Activated naive CD4-positive, alpha-beta T cell treated with anti-CD3 and anti-CD28 coated beads for 36 hours (primary cell): ENCODE measurements at regions of chr17 and their contacts with region 1.

Region 1: GRCh38 chr17:17919169-17920107 is 52.8 kb downstream of the TOM1L2 start:
- DNase-seq: peak; percentile 82
- H3K4me3 Mint-ChIP-seq: no peak overlapping the region
- H3K27ac Mint-ChIP-seq: no peak overlapping the region
- H3K4me1 Mint-ChIP-seq: peaks cover 16% of the 10 kb centered on the region
- H3K27me3 Mint-ChIP-seq: no peaks in the 10 kb centered on the region

Region 2: GRCh38 chr17:17641621-17642409 is 277.6 kb before region 1 on chr17:
- CTCF ChIA-PET with region 1: interaction called, 11 read pairs
- intact Hi-C with region 1: no loop called
- DNase-seq: peak; percentile 90
- H3K4me3 Mint-ChIP-seq: no peak overlapping the region
- H3K27ac Mint-ChIP-seq: no peak overlapping the region
- H3K4me1 Mint-ChIP-seq: no peaks in the 10 kb centered on the region
- H3K27me3 Mint-ChIP-seq: no peaks in the 10 kb centered on the region

Region 3: DNA sequence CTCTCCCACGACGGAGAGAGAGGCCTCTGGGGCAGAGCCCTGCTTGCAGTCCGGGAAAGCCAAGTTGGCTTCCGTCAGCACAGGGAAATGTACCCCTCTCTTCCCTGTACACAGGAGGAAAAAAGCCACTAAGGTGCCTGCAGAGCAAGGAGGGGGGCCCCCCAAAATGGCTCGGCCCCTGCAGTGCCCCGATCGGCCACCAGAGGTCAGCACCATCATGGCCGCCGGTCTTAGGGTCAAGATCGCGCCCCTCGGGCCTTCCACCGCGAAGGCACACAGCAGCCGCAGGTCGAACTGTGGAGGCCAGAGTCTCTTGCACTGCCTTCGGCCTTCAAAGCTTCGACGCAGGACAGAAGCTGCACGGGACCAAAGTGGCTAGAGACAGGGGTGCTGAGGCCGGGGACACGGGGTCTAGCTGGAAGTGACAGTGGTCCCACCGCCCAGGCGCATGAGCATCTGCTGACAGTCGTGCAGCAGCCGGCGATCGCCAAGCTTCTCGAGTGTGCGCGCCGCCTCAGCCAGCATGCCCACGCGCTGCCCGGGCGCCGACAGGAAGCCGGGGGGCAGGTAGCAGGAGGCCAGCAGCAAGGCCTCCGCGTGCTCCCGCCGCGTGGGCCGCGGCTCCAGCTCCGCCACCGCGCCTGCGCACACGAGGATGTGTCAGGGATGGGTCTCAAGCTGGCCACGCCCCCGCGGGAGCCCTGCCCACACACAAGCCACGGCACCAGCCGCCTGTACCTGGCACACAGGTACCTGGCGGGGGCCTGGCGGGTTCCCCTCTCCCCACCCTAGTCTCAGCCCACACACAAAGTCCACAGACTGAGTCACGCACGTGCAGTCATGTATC is 107.0 kb before region 1 on chr17:
- CTCF ChIA-PET with region 1: interaction called, 5 read pairs
- intact Hi-C with region 1: loop called (anchors 2 kb)
- DNase-seq: peak; percentile 72
- H3K4me3 Mint-ChIP-seq: no peak overlapping the region
- H3K27ac Mint-ChIP-seq: peak overlapping the region; percentile 18
- H3K4me1 Mint-ChIP-seq: peaks cover 10% of the 10 kb centered on the region
- H3K27me3 Mint-ChIP-seq: no peaks in the 10 kb centered on the region

Region 4: GRCh38 chr17:17897442-17897841 is 22.0 kb before region 1 on chr17:
- CTCF ChIA-PET with region 1: interaction called, 13 read pairs
- intact Hi-C with region 1: no loop called
- DNase-seq: no peak
- H3K4me3 Mint-ChIP-seq: no peak overlapping the region
- H3K27ac Mint-ChIP-seq: no peak overlapping the region
- H3K4me1 Mint-ChIP-seq: peaks cover 2% of the 10 kb centered on the region
- H3K27me3 Mint-ChIP-seq: no peaks in the 10 kb centered on the region

Region 5: DNA sequence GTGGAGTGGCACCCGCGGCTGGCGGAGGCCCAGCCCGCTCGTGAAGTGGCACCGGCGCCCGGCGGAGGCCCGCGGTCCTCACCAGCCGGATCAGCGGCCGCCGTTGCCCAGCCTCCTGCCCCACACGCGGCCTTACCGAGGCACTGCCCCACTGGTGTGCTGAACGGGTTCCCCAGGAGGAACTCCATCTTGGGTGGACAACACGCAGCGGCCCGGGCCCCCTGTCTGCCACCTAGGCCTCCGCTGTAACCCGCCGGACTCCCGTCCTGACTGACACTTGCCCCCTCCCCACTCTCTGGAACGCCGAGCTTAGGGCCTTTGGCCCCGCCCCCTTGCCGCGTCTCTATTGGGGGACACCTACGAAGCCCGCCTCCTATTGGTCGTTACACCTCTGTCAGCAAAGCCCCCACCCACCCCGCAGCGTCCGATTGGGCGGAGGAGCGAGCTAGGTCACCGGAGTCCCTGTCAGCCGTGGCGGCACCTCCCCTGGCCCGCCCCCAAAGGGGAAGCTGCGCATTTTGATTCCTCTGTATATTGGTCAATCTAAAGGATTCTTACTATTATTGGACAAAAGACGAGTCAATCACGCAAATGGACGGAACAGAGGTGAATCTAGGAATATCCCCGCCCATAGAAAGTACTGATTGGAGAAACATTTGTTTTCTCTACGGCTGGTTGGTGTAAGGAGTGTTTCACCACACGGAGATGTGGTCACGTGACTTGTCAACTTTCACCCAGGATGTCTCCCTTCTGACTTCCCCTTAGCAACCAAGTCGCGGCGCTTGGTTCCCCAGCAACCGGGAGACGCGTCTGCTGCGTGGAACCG is 52.9 kb after region 1 on chr17 and contains the starts of genes DRC3 and TOM1L2:
- CTCF ChIA-PET with region 1: interaction called, 7 read pairs
- intact Hi-C with region 1: loop called (anchors 2 kb)
- DNase-seq: peak; percentile 100
- H3K4me3 Mint-ChIP-seq: peak within 1 kb of the TSS; percentile 90
- H3K27ac Mint-ChIP-seq: peak within 1 kb of the TSS; percentile 75
- H3K4me1 Mint-ChIP-seq: peaks cover 35% of the 10 kb centered on the region
- H3K27me3 Mint-ChIP-seq: no peaks in the 10 kb centered on the region
- total RNA-seq, gene DRC3: 0.40 to 0.64 TPM
- total RNA-seq, gene TOM1L2: 9.8 to 9.9 TPM

Region 6: GRCh38 chr17:18017958-18018357 is 98.5 kb after region 1 on chr17:
- CTCF ChIA-PET with region 1: no interaction called
- intact Hi-C with region 1: no loop called
- DNase-seq: no peak
- H3K4me3 Mint-ChIP-seq: no peak overlapping the region
- H3K27ac Mint-ChIP-seq: no peak overlapping the region
- H3K4me1 Mint-ChIP-seq: no peaks in the 10 kb centered on the region
- H3K27me3 Mint-ChIP-seq: no peaks in the 10 kb centered on the region